ENCODE measurements at regions of chr4 and their contacts with region 1.

Region 1: DNA sequence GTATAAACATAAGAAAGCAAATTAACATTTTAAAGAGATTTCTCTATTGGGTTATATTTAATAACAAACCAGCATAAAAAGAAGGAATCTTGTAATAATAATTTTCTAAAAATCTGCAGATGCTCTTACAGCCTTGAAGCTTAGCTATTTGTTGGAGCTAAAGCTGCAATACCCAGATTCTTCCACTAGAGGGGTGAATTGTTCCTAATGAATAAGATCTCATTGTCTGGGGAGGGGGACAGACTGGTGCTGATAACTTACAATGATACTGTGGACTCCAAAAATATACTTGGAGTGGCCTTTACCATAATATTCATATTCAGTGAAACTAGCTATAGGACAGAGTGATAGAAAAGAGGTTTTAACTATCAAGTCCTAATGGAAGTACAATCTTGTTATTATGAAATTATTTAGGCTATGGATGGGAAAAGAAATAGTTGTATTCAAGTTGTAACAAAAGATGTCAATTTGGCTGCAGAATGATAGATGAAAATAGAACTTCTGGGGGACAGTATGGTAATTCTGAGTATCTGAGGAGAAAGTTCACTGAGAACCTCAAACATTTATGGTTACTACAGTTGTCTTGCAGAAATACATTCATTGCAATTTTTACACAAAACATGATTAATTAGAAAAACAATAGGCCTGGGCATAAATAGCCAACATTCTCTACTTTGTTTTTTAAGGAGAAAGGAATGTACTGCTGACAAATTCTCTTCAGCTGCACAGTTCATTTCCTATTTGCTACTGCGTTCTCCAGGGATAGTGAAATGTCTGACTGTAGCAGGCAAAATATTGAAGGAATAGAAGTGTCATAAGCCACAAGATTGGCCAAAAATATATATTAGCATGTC is 443.3 kb downstream of the GBA3 start:
- DNase-seq: peak; percentile 64
- H3K4me3 Mint-ChIP-seq: no peak overlapping the region
- H3K27ac Mint-ChIP-seq: no peak overlapping the region
- H3K4me1 Mint-ChIP-seq: no peaks in the 10 kb centered on the region
- H3K27me3 Mint-ChIP-seq: no peaks in the 10 kb centered on the region
- CTCF ChIP-seq: peak; percentile 85

Region 2: DNA sequence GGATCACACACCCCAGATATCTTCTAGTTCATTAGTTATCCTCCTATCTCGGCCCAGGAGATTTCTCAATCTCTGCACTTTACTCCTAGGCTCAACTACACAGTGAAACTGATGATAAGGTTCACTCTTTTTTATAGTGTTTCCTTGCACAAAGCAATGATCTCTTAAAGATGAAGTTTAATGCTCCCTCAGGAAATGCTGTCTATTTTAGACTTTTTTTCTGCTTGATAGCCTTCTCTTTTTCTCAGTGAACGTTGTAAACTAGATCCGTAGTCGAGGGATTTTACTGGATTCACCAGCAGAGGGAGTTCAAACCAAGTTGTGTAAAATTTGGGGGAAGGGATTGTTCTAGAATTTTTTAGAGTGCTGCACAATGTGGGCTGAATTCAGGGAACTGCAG is 173.7 kb before region 1 on chr4:
- CTCF ChIA-PET with region 1: interaction called, 4 read pairs
- POLR2A ChIA-PET with region 1: no interaction called
- intact Hi-C with region 1: loop called (anchors 2 kb)
- DNase-seq: peak; percentile 61
- H3K4me3 Mint-ChIP-seq: no peak overlapping the region
- H3K27ac Mint-ChIP-seq: no peak overlapping the region
- H3K4me1 Mint-ChIP-seq: peaks cover 5% of the 10 kb centered on the region
- H3K27me3 Mint-ChIP-seq: no peaks in the 10 kb centered on the region
- CTCF ChIP-seq: peak; percentile 51

Region 3: GRCh38 chr4:23333946-23334878 is 198.2 kb after region 1 on chr4:
- CTCF ChIA-PET with region 1: interaction called, 4 read pairs
- POLR2A ChIA-PET with region 1: no interaction called
- intact Hi-C with region 1: loop called (anchors 10 kb)
- DNase-seq: peak; percentile 95
- H3K4me3 Mint-ChIP-seq: no peak overlapping the region
- H3K27ac Mint-ChIP-seq: peak overlapping the region; percentile 77
- H3K4me1 Mint-ChIP-seq: peaks cover 18% of the 10 kb centered on the region
- H3K27me3 Mint-ChIP-seq: no peaks in the 10 kb centered on the region
- CTCF ChIP-seq: no peak

Region 4: DNA sequence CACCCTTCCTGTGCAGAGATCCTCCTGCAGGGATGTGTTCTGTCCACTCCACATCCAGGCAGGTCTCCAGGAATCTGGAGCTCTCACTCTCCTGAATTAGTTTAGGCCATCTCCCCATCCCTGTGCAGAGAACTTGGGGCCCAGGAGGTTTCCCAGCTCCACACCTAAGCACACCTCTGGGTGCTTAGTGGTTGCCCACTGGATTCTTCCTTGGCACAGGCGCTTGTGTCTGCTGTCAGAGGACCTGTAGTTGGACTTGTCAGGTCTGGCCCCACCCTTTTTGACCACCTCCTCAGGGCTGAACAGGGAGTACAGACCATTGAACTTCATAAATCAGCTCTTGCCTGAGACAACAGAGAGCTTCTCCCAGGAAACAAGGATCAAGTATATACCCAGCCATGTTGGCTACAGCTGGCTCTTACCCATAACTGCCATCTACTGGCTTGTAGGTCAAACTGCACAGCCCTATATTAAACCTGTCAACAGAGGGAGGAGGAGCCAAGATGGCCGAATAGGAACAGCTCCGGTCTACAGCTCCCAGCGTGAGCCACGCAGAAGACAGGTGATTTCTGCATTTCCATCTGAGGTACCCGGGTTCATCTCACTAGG is 478.4 kb after region 1 on chr4:
- CTCF ChIA-PET with region 1: interaction called, 3 read pairs
- POLR2A ChIA-PET with region 1: no interaction called
- intact Hi-C with region 1: loop called (anchors 5 kb)
- DNase-seq: peak; percentile 45
- H3K4me3 Mint-ChIP-seq: no peak overlapping the region
- H3K27ac Mint-ChIP-seq: no peak overlapping the region
- H3K4me1 Mint-ChIP-seq: no peaks in the 10 kb centered on the region
- H3K27me3 Mint-ChIP-seq: no peaks in the 10 kb centered on the region
- CTCF ChIP-seq: peak; percentile 20

Region 5: GRCh38 chr4:23717528-23718248 is 581.7 kb after region 1 on chr4:
- CTCF ChIA-PET with region 1: interaction called, 8 read pairs
- POLR2A ChIA-PET with region 1: no interaction called
- intact Hi-C with region 1: loop called (anchors 2 kb)
- DNase-seq: peak; percentile 34
- H3K4me3 Mint-ChIP-seq: no peak overlapping the region
- H3K27ac Mint-ChIP-seq: no peak overlapping the region
- H3K4me1 Mint-ChIP-seq: no peaks in the 10 kb centered on the region
- H3K27me3 Mint-ChIP-seq: no peaks in the 10 kb centered on the region
- CTCF ChIP-seq: peak; percentile 23

Measured in MCF 10A (cell line).